Heart right ventricle (tissue), 16 donors: ENCODE measurements at regions of chr3 and their contacts with region 1.

Region 1: GRCh38 chr3:155805802-155806618 is at the start of gene C3orf33:
- DNase-seq: peak; percentile 50 to 79
- ATAC-seq: peak; percentile 95 to 99 (median 96)
- H3K4me3 ChIP-seq: peak within 1 kb of the TSS; percentile 40 to 93 (median 70)
- H3K27ac ChIP-seq: peak within 1 kb of the TSS; percentile 37 to 93 (median 83)
- H3K4me1 ChIP-seq: peaks cover 0 to 31% (median 4%) of the 10 kb centered on the region in 9 donors
- H3K27me3 ChIP-seq: no peaks in the 10 kb centered on the region
- CTCF ChIP-seq: peak in 8 of 9 donors; percentile 76 to 97 (median 86)
- total RNA-seq, gene C3orf33: 4.3 to 8.5 (median 6.2) TPM

Region 2: GRCh38 chr3:155730847-155731246 is 75.2 kb before region 1 on chr3:
- intact Hi-C with region 1: no loop called
- DNase-seq: no peak
- ATAC-seq: no peak
- H3K4me3 ChIP-seq: no peak overlapping the region
- H3K27ac ChIP-seq: no peak overlapping the region
- H3K4me1 ChIP-seq: no peaks in the 10 kb centered on the region
- H3K27me3 ChIP-seq: no peaks in the 10 kb centered on the region
- CTCF ChIP-seq: no peak

Region 3: DNA sequence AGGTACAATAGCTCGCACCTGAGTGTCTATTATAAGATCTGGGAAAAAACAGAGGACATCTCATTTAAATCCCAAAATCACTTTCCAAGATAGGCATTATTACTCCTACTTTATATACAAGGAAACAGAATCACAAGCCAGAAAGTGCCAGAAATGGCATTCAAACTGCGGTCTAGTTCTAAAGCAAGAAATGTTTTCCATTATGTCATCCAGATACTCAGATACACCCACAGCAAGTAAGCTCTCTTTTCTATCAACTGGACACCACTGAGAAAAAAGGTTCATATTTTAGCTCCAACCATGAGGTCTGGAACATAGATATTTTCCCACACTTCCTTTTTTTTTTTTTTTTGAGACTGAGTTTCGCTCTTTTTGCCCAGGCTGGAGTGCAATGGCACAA is 40.1 kb after region 1 on chr3:
- intact Hi-C with region 1: loop called in 5 of 10 experiments (anchors 5 to 10 kb)
- DNase-seq: no peak
- ATAC-seq: peak in 2 of 8 donors; percentile 33 to 71
- H3K4me3 ChIP-seq: no peak overlapping the region
- H3K27ac ChIP-seq: peak overlapping the region in 3 of 10 donors; percentile 14 to 16 (median 16)
- H3K4me1 ChIP-seq: peaks cover 3 to 74% (median 47%) of the 10 kb centered on the region in 9 donors
- H3K27me3 ChIP-seq: no peaks in the 10 kb centered on the region
- CTCF ChIP-seq: no peak

Region 4: DNA sequence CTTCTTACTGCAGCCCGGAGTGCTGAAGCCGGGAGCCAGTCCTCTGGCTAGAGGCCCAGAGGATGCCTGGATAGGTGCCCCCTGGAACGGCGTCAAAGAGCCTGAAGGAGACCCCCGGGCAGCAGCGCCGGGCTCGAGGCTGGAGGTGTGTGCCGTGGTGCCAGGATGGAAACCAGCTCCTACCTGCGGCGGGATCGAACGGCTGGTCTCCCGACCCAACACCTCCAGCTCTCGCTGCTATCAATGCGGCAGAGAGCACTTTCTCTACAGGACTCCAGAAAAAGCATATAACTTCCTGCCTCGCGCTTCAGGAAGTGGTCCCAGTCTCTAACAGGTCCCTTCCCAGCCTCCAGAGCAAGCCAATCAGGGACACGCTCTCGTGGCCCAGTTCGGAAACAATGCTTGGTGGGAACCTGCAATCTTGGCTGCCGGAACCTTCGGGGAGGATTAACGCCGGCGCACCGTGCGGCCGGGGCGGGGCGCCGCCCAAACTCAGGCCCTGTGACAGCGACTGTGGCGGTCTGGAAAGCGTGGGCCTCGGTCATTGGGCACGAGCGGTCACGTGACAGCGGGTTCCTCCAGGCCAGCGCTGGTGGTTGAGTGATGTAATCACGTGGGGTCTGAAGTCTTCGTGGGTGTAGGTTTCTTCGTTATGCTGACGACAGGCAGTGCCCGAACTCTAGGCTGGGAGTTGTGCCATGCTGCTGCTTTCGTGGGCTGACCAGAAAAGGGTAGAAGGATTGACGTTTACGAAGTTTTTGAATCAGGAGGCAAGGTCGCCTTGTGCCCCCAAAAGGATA is 48.3 kb after region 1 on chr3 and contains the start of gene SLC33A1:
- intact Hi-C with region 1: loop called in 5 of 10 experiments (anchors 5 to 10 kb)
- DNase-seq: peak; percentile 98 to 99
- ATAC-seq: peak; percentile 98 to 99 (median 99)
- H3K4me3 ChIP-seq: peak within 1 kb of the TSS; percentile 74 to 100 (median 89)
- H3K27ac ChIP-seq: peak within 1 kb of the TSS; percentile 72 to 96 (median 92)
- H3K4me1 ChIP-seq: peaks cover 16 to 49% (median 45%) of the 10 kb centered on the region in 9 donors
- H3K27me3 ChIP-seq: no peaks in the 10 kb centered on the region
- CTCF ChIP-seq: no peak
- total RNA-seq, gene SLC33A1: 18.9 to 35.3 (median 25.8) TPM

Region 5: GRCh38 chr3:155859859-155860258 is 53.8 kb after region 1 on chr3:
- intact Hi-C with region 1: loop called in 2 of 10 experiments (anchors 10 kb)
- DNase-seq: no peak
- ATAC-seq: no peak
- H3K4me3 ChIP-seq: no peak overlapping the region
- H3K27ac ChIP-seq: no peak overlapping the region
- H3K4me1 ChIP-seq: peaks cover 0 to 9% (median 4%) of the 10 kb centered on the region in 9 donors
- H3K27me3 ChIP-seq: no peaks in the 10 kb centered on the region
- CTCF ChIP-seq: peak in 4 of 9 donors; percentile 25 to 46 (median 34)

Region 6: GRCh38 chr3:155870133-155870944 is 64.3 kb after region 1 on chr3 and contains the start of gene GMPS:
- intact Hi-C with region 1: loop called in 4 of 10 experiments (anchors 1 to 10 kb)
- DNase-seq: peak; percentile 92 to 97
- ATAC-seq: peak; percentile 97 to 99 (median 98)
- H3K4me3 ChIP-seq: peak within 1 kb of the TSS; percentile 87 to 99 (median 97)
- H3K27ac ChIP-seq: peak within 1 kb of the TSS; percentile 60 to 97 (median 94)
- H3K4me1 ChIP-seq: peaks cover 0 to 34% (median 25%) of the 10 kb centered on the region in 9 donors
- H3K27me3 ChIP-seq: no peaks in the 10 kb centered on the region
- CTCF ChIP-seq: peak in 8 of 9 donors; percentile 49 to 75 (median 64)
- total RNA-seq, gene GMPS: 23.5 to 34.5 (median 30.6) TPM